Right ventricle myocardium inferior (tissue), 1 donor: ENCODE measurements at regions of chr21 and their contacts with region 1.

Region 1: DNA sequence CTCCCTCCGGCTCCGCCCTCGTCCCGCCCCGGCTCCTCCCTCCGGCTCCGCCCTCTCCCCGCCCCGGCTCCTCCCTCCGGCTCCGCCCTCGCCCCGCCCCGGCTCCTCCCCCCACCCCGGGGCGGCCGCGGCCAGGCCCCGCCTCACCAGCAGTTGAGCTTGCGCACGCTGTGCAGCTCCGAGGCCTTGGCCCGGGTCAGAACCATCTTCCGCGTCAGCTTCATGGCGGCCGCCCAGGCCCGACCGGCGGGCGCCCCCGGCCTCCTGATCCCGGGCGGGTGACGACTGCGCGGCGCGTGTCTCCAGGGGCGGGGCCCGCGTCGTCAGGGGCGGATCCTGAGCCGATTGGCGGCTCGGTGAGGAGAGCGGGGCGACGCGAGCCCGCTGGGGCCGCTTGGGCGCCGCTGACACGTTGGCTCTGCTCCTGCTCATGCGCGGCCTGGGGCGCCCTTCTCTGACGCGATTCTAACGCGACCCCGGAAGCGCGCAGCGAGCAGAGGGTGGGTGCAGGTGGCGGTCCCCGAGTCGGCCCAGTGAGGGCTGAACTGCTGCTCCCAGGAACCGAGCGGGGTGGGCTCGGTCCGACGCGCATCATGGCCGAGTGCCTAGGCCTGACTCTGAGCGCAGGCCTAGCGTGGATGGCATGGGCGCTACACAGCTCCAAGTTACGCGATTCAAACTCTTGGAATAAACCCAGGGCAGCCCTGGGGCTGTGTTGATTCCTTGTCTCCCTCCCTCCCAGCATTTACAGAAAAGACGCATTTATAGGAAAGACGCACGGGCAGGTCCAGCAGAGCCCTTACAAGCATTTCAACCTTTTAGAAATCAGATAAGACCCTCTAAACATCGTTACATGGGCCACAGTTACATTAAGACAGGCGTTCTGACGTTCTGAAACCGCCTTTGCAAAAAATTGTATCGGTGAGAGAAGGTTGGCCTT is at the start of gene CFAP410:
- DNase-seq: peak; percentile 97
- ATAC-seq: peak; percentile 94
- total RNA-seq, gene CFAP410: 16.8 TPM

Region 2: GRCh38 chr21:43866260-43866629 is 473.0 kb before region 1 on chr21:
- intact Hi-C with region 1: no loop called
- DNase-seq: no peak
- ATAC-seq: peak; percentile 42

Region 3: GRCh38 chr21:44294391-44295162 is 44.7 kb before region 1 on chr21:
- intact Hi-C with region 1: no loop called
- DNase-seq: peak; percentile 92
- ATAC-seq: peak; percentile 67

Region 4: DNA sequence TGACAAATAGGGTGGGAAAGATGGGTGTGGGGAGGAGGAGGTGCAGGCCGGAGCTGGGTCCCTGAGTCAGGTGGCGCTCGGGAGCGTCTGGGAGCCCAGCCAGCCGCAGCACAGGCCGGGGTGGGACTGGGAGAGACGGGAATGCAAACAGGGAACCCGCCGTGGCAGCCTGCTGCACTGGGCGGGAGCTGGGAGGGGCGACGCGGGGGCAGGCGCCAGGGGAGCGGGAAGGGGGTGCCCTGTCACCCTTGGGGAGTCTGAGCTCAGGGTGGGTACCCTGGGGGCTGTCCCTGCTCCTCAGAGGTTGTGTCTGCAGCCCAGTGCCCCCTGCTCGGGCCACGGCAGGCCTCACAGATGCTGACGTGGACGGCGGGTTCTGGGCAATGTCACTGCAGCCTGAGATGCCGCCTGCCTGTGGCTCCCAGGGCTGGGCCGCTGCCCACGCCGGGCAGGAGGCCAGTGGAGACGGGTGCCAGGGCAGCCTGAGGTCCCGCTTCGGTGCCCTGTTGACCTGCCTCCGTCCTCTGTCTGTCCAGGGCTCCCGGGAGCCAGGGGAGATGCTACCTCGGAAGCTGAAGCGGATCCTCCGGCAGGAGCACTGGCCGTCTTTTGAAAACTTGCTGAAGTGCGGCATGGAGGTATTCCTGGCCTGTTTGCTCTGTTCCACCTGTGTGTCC is 99.4 kb after region 1 on chr21:
- intact Hi-C with region 1: loop called (anchors 5 kb)
- DNase-seq: peak; percentile 81
- ATAC-seq: peak; percentile 91